ENCODE measurements at regions of chr4 and their contacts with region 1.

Region 1: GRCh38 chr4:173420324-173420752 is 21.4 kb upstream of the SCRG1 start:
- DNase-seq: no peak
- H3K4me3 ChIP-seq: no peak overlapping the region
- CTCF ChIP-seq: peak; percentile 12

Region 2: GRCh38 chr4:173288296-173288695 is 132.0 kb before region 1 on chr4:
- CTCF ChIA-PET with region 1: interaction called, 11 read pairs
- POLR2A ChIA-PET with region 1: no interaction called
- DNase-seq: peak; percentile 17
- H3K4me3 ChIP-seq: no peak overlapping the region
- CTCF ChIP-seq: peak; percentile 48

Region 3: GRCh38 chr4:173318648-173319211 is 101.6 kb before region 1 on chr4:
- CTCF ChIA-PET with region 1: interaction called, 464 read pairs
- POLR2A ChIA-PET with region 1: interaction called, 3 read pairs
- DNase-seq: no peak
- H3K4me3 ChIP-seq: no peak overlapping the region
- CTCF ChIP-seq: no peak

Region 4: DNA sequence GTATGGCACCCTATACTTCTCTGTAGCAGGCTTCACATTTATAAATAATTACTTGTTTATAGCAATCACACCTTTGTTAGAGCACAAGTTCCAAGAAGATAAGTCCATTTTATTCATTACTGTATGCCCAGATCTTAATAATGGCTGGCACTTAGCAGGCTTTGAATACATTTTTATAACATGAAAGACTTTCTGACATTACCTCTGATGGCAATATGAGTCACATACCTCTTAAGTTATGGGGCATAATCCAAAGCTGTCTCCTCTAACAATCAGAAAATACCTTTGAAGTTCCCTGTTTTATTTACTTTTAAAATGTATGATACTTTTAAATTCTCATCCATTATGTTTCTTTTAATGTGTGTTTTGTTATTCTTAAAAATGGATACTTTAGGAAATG is 33.6 kb before region 1 on chr4:
- CTCF ChIA-PET with region 1: interaction called, 11 read pairs
- POLR2A ChIA-PET with region 1: no interaction called
- DNase-seq: no peak
- H3K4me3 ChIP-seq: no peak overlapping the region
- CTCF ChIP-seq: no peak

Region 5: GRCh38 chr4:173432430-173432829 is 12.1 kb after region 1 on chr4:
- CTCF ChIA-PET with region 1: interaction called, 16 read pairs
- POLR2A ChIA-PET with region 1: no interaction called
- DNase-seq: no peak
- H3K4me3 ChIP-seq: no peak overlapping the region
- CTCF ChIP-seq: no peak

Region 6: GRCh38 chr4:173505924-173506518 is 85.7 kb after region 1 on chr4:
- CTCF ChIA-PET with region 1: interaction called, 114 read pairs
- POLR2A ChIA-PET with region 1: no interaction called
- DNase-seq: no peak
- H3K4me3 ChIP-seq: no peak overlapping the region
- CTCF ChIP-seq: peak; percentile 82

Measured in AG04449 (cell line).